Activated CD4-positive, alpha-beta memory T cell treated with anti-CD3 and anti-CD28 coated beads for 36 hours (primary cell): ENCODE measurements at regions of chr17 and their contacts with region 1.

Region 1: GRCh38 chr17:67824735-67825626 is at the start of gene BPTF:
- DNase-seq: peak; percentile 94
- H3K4me3 Mint-ChIP-seq: peak within 1 kb of the TSS; percentile 95
- H3K27ac Mint-ChIP-seq: peak within 1 kb of the TSS; percentile 97
- H3K4me1 Mint-ChIP-seq: peaks cover 28% of the 10 kb centered on the region
- H3K27me3 Mint-ChIP-seq: peaks cover 2% of the 10 kb centered on the region
- total RNA-seq, gene BPTF: 67.6 to 71.4 TPM

Region 2: DNA sequence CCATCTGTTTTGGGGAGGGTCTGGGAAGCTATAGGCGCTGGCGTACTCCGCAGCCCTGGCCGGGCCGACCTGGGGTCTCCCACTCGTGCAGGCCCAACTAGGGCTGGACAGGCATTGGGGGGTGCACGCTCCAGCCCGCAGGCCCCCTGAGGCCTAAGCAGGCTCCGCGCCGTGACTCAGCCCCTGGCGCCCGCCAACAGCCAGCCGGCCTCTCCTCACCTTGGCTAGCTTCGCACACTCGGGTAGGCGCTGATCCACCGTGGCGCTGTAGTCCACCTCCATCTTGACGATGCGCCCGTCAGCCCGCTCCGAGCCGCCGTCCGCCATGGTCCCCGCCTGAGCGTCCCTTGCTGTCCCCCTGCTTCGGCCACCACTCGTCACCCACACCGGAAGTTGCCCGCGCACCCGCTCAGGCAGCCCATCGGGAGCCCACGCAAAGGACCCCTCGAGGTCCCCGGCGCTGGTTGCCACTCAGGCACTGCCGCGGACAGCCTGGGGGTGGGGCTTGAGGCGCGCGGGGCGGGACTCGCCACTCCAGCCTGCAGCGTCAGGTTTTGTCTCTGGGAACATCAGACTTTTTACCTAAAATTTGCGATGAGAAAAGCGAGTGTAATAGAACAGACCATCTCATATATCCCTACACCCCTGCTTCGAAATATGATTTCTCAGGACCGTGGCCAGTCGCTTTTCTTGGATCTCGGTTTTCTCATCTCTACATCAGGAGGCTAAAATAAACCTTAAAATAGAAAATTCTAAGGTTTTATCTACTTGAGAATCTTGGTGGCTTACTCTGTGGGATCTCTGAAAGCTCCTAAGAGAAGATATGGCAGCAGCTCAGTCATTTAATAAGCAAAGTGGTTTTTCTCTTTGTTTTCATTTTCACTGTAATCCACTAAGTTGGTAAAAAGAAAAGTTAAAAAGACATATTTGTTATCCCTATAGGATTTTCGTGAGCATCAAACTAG is 458.5 kb before region 1 on chr17 and contains the start of gene PSMD12:
- CTCF ChIA-PET with region 1: no interaction called
- POLR2A ChIA-PET with region 1: no interaction called
- intact Hi-C with region 1: loop called (anchors 2 kb)
- DNase-seq: peak; percentile 96
- H3K4me3 Mint-ChIP-seq: peak within 1 kb of the TSS; percentile 95
- H3K27ac Mint-ChIP-seq: peak within 1 kb of the TSS; percentile 98
- H3K4me1 Mint-ChIP-seq: peaks cover 45% of the 10 kb centered on the region
- H3K27me3 Mint-ChIP-seq: no peaks in the 10 kb centered on the region
- total RNA-seq, gene PSMD12: 94.0 to 98.6 TPM

Region 3: DNA sequence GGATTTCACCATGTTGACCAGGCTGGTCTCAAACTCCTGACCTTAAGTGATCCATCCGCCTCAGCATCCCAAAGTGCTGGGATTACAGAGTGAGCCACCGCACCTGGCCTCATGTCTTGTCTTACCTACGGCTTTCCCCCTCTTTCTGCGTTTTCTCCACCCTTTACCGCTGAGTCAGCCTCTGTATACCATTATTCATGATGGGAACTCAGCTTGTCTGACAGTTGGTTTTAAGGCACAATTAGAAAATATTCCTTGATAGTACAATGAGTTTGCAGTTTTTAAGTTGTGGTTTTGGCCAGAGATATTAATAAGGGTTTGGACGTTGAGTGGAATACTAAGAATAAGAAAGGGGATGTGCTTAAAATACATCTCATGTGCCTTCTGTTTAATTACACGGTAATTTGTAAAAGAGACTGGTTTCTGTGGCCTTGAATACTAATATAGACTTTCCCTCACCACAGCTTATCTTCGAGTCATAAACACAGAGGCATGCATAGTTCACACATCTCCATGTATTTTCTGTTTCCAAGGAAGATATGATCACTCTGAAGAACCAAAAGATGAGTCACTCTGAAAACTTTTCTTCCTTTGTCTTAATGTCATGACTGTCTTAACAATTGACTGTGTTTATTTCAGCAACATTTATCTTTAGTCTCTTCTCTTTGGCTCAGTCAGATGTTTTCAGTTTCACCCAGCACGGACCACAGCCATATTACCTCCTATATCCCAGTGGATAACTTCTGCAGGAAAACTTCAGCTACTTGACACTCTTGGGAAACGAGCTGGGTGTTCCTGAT is 393.5 kb before region 1 on chr17:
- CTCF ChIA-PET with region 1: no interaction called
- POLR2A ChIA-PET with region 1: no interaction called
- intact Hi-C with region 1: loop called (anchors 5 kb)
- DNase-seq: peak; percentile 36
- H3K4me3 Mint-ChIP-seq: peak overlapping the region; percentile 58
- H3K27ac Mint-ChIP-seq: peak overlapping the region; percentile 89
- H3K4me1 Mint-ChIP-seq: peaks cover 69% of the 10 kb centered on the region
- H3K27me3 Mint-ChIP-seq: no peaks in the 10 kb centered on the region

Region 4: DNA sequence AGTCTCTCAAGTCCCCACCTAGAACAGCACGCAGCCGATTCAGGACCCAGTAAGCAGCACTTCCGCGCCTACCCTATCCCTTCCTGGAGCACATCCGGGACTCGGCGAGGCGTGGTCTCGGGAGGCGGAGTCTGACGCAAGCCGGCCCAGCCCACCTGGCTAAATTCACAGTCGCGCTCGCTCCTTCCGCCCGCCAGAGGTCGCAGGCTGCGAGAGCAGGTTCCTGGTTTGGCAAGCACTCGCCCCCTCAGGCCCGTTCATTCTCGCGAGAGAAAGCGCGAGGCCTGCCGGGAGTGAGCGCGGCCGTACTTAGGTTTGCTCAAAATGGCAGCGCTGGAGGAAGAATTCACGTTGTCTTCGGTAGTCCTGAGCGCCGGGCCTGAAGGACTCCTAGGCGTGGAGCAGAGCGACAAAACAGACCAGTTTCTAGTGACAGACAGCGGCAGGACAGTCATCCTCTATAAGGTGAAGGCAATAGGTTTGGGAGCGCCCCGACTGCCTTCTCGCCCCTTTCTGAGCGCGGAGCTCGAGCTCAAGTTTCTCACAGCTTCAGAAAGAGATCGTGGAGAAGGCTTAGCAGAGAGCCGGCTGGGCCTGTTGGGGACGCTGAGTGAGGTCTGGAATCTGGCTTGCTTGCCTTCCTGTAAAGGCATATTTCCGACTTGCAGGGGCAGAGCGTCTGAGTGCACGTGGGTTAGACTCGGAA is 107.2 kb before region 1 on chr17 and contains the start of gene NOL11:
- CTCF ChIA-PET with region 1: interaction called, 3 read pairs
- POLR2A ChIA-PET with region 1: interaction called, 3 read pairs
- intact Hi-C with region 1: loop called (anchors 1 kb)
- DNase-seq: peak; percentile 100
- H3K4me3 Mint-ChIP-seq: peak within 1 kb of the TSS; percentile 94
- H3K27ac Mint-ChIP-seq: peak within 1 kb of the TSS; percentile 93
- H3K4me1 Mint-ChIP-seq: peaks cover 22% of the 10 kb centered on the region
- H3K27me3 Mint-ChIP-seq: peaks cover 2% of the 10 kb centered on the region
- total RNA-seq, gene NOL11: 59.5 to 62.0 TPM

Region 5: GRCh38 chr17:67862614-67863217 is 37.7 kb after region 1 on chr17:
- CTCF ChIA-PET with region 1: no interaction called
- POLR2A ChIA-PET with region 1: no interaction called
- intact Hi-C with region 1: loop called (anchors 2 kb)
- DNase-seq: no peak
- H3K4me3 Mint-ChIP-seq: no peak overlapping the region
- H3K27ac Mint-ChIP-seq: peak overlapping the region; percentile 20
- H3K4me1 Mint-ChIP-seq: peaks cover 63% of the 10 kb centered on the region
- H3K27me3 Mint-ChIP-seq: no peaks in the 10 kb centered on the region

Region 6: DNA sequence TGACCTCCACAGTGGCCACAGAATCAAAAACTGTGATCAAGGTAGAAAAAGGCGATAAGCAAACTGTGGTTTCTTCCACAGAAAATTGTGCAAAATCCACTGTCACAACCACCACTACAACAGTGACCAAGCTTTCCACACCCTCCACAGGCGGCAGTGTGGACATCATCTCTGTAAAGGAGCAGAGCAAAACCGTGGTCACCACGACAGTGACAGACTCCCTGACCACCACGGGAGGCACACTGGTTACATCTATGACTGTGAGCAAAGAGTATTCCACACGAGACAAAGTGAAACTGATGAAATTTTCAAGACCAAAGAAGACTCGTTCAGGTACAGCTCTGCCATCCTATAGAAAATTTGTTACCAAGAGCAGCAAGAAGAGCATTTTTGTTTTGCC is 87.7 kb after region 1 on chr17:
- CTCF ChIA-PET with region 1: no interaction called
- POLR2A ChIA-PET with region 1: no interaction called
- intact Hi-C with region 1: loop called (anchors 5 kb)
- DNase-seq: peak; percentile 37
- H3K4me3 Mint-ChIP-seq: no peak overlapping the region
- H3K27ac Mint-ChIP-seq: peak overlapping the region; percentile 18
- H3K4me1 Mint-ChIP-seq: peaks cover 25% of the 10 kb centered on the region
- H3K27me3 Mint-ChIP-seq: no peaks in the 10 kb centered on the region